ENCODE measurements at regions of chr3 and their contacts with region 1.

Region 1: GRCh38 chr3:52056968-52057805 is 816 bp upstream of the DUSP7 start:
- DNase-seq: peak; percentile 90 to 100 (median 99)
- ATAC-seq: peak; percentile 93
- H3K4me3 ChIP-seq: peak overlapping the region; percentile 92
- H3K4me3 Mint-ChIP-seq: peak overlapping the region; percentile 90 to 97 (median 94)
- H3K27ac ChIP-seq: peak overlapping the region; percentile 79
- H3K27ac Mint-ChIP-seq: peak overlapping the region; percentile 78 to 97 (median 93)
- H3K4me1 ChIP-seq: peaks cover 34 to 35% of the 10 kb centered on the region in 2 donors
- H3K4me1 Mint-ChIP-seq: peaks cover 26 to 39% (median 26%) of the 10 kb centered on the region in 7 donors
- H3K27me3 ChIP-seq: no peaks in the 10 kb centered on the region
- H3K27me3 Mint-ChIP-seq: peaks cover 0 to 4% (median 0%) of the 10 kb centered on the region in 5 donors

Region 2: DNA sequence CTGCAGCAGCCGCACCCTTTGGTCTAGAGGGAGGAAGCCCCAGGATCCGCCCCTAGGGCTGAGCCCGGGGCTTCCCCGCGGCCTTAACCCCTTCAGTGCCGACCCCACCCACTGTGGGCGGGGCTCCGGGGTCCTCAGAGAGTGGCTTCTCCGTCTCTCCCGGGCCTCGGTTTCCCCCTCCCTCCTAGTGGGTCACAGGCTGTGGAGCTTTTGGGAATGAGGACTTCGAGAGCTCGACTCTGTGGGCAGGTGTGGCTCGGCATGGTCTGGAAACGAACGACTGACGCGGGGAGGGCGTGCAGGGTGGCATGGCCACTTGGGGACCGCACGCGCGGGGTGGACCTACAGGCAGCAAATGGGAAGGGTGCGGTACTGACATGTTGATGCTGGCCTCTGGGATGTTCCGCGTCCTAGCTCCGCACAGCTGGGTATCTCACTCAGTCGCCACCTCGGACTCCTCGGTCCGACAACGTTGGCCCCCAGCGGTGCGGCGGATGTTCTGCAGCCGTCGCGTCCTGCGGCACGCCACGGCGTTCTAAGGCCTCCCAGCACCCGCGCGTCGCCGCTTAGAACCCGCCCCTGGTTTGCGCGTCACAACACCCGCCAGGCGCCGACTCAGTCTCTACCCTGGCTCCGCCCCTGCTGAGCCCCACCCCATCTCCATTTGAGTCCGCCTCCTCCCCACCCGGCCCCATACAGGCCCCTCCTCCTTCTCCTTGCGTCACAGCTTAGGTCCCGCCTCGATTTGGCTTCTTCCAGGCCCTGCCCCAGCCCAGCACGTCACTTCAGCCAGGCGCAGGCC is 1758.2 kb before region 1 on chr3 and contains the starts of genes HYAL3 and NAA80:
- CTCF ChIA-PET with region 1: no interaction called
- POLR2A ChIA-PET with region 1: no interaction called
- intact Hi-C with region 1: loop called in 1 of 2 experiments (anchors 10 kb)
- DNase-seq: peak; percentile 94 to 100 (median 99)
- ATAC-seq: peak; percentile 93
- H3K4me3 ChIP-seq: peak within 1 kb of the TSS; percentile 97
- H3K4me3 Mint-ChIP-seq: peak within 1 kb of the TSS; percentile 84 to 99 (median 97)
- H3K27ac ChIP-seq: peak within 1 kb of the TSS; percentile 86
- H3K27ac Mint-ChIP-seq: peak within 1 kb of the TSS; percentile 90 to 100 (median 99)
- H3K4me1 ChIP-seq: peaks cover 19 to 20% of the 10 kb centered on the region in 2 donors
- H3K4me1 Mint-ChIP-seq: peaks cover 12 to 36% (median 22%) of the 10 kb centered on the region in 7 donors
- H3K27me3 ChIP-seq: no peaks in the 10 kb centered on the region
- H3K27me3 Mint-ChIP-seq: no peaks in the 10 kb centered on the region
- total RNA-seq, gene HYAL3: 3.4 to 10.7 (median 4.2) TPM
- total RNA-seq, gene NAA80: 30.2 to 44.9 (median 33.6) TPM

Region 3: GRCh38 chr3:51498876-51499738 is 558.1 kb before region 1 on chr3:
- CTCF ChIA-PET with region 1: no interaction called
- POLR2A ChIA-PET with region 1: interaction called, 5 read pairs
- intact Hi-C with region 1: loop called in 1 of 2 experiments (anchors 2 kb)
- DNase-seq: peak; percentile 52 to 90 (median 73)
- ATAC-seq: peak; percentile 58
- H3K4me3 ChIP-seq: peak overlapping the region; percentile 84
- H3K4me3 Mint-ChIP-seq: peak overlapping the region; percentile 87 to 100 (median 98)
- H3K27ac ChIP-seq: peak overlapping the region; percentile 90
- H3K27ac Mint-ChIP-seq: peak overlapping the region; percentile 90 to 99 (median 94)
- H3K4me1 ChIP-seq: peaks cover 10 to 14% of the 10 kb centered on the region in 2 donors
- H3K4me1 Mint-ChIP-seq: peaks cover 4 to 38% (median 35%) of the 10 kb centered on the region in 7 donors
- H3K27me3 ChIP-seq: no peaks in the 10 kb centered on the region
- H3K27me3 Mint-ChIP-seq: peaks cover 0 to 2% (median 0%) of the 10 kb centered on the region in 5 donors

Region 4: GRCh38 chr3:51995346-51996163 is 61.6 kb before region 1 on chr3 and contains the start of gene RPL29:
- CTCF ChIA-PET with region 1: interaction called, 70 read pairs
- POLR2A ChIA-PET with region 1: interaction called, 33 read pairs
- intact Hi-C with region 1: loop called in 1 of 2 experiments (anchors 1 kb)
- DNase-seq: peak; percentile 80 to 95 (median 92)
- ATAC-seq: peak; percentile 99
- H3K4me3 ChIP-seq: peak within 1 kb of the TSS; percentile 98
- H3K4me3 Mint-ChIP-seq: peak within 1 kb of the TSS; percentile 92 to 100 (median 98)
- H3K27ac ChIP-seq: peak within 1 kb of the TSS; percentile 95
- H3K27ac Mint-ChIP-seq: peak within 1 kb of the TSS; percentile 98 to 100 (median 100)
- H3K4me1 ChIP-seq: peaks cover 13 to 15% of the 10 kb centered on the region in 2 donors
- H3K4me1 Mint-ChIP-seq: peaks cover 19 to 44% (median 31%) of the 10 kb centered on the region in 7 donors
- H3K27me3 ChIP-seq: no peaks in the 10 kb centered on the region
- H3K27me3 Mint-ChIP-seq: peaks cover 0 to 16% (median 0%) of the 10 kb centered on the region in 5 donors
- total RNA-seq, gene RPL29: 1,152 to 1,744 (median 1,537) TPM

Region 5: GRCh38 chr3:52144034-52144795 is 87.0 kb after region 1 on chr3:
- CTCF ChIA-PET with region 1: interaction called, 5 read pairs
- POLR2A ChIA-PET with region 1: interaction called, 3 read pairs
- intact Hi-C with region 1: loop called (anchors 1 to 2 kb)
- DNase-seq: peak; percentile 70 to 88 (median 82)
- ATAC-seq: peak; percentile 98
- H3K4me3 ChIP-seq: no peak overlapping the region
- H3K4me3 Mint-ChIP-seq: peak overlapping the region in 1 of 10 donors; percentile 6
- H3K27ac ChIP-seq: no peak overlapping the region
- H3K27ac Mint-ChIP-seq: peak overlapping the region in 5 of 9 donors; percentile 38 to 80 (median 64)
- H3K4me1 ChIP-seq: peaks cover 5 to 6% of the 10 kb centered on the region in 2 donors
- H3K4me1 Mint-ChIP-seq: peaks cover 5 to 10% (median 7%) of the 10 kb centered on the region in 7 donors
- H3K27me3 ChIP-seq: no peaks in the 10 kb centered on the region
- H3K27me3 Mint-ChIP-seq: no peaks in the 10 kb centered on the region

Region 6: GRCh38 chr3:52238761-52239701 is 181.8 kb after region 1 on chr3 and contains the start of gene TWF2:
- CTCF ChIA-PET with region 1: interaction called, 3 read pairs
- POLR2A ChIA-PET with region 1: interaction called, 4 read pairs
- intact Hi-C with region 1: loop called in 1 of 2 experiments (anchors 1 kb)
- DNase-seq: peak; percentile 87 to 96 (median 91)
- ATAC-seq: peak; percentile 91
- H3K4me3 ChIP-seq: peak within 1 kb of the TSS; percentile 92
- H3K4me3 Mint-ChIP-seq: peak within 1 kb of the TSS; percentile 86 to 100 (median 96)
- H3K27ac ChIP-seq: peak within 1 kb of the TSS; percentile 95
- H3K27ac Mint-ChIP-seq: peak within 1 kb of the TSS; percentile 83 to 99 (median 97)
- H3K4me1 ChIP-seq: peaks cover 59 to 62% of the 10 kb centered on the region in 2 donors
- H3K4me1 Mint-ChIP-seq: peaks cover 59 to 88% (median 76%) of the 10 kb centered on the region in 7 donors
- H3K27me3 ChIP-seq: no peaks in the 10 kb centered on the region
- H3K27me3 Mint-ChIP-seq: no peaks in the 10 kb centered on the region
- total RNA-seq, gene TWF2: 38.7 to 110 (median 63.7) TPM

Region 7: DNA sequence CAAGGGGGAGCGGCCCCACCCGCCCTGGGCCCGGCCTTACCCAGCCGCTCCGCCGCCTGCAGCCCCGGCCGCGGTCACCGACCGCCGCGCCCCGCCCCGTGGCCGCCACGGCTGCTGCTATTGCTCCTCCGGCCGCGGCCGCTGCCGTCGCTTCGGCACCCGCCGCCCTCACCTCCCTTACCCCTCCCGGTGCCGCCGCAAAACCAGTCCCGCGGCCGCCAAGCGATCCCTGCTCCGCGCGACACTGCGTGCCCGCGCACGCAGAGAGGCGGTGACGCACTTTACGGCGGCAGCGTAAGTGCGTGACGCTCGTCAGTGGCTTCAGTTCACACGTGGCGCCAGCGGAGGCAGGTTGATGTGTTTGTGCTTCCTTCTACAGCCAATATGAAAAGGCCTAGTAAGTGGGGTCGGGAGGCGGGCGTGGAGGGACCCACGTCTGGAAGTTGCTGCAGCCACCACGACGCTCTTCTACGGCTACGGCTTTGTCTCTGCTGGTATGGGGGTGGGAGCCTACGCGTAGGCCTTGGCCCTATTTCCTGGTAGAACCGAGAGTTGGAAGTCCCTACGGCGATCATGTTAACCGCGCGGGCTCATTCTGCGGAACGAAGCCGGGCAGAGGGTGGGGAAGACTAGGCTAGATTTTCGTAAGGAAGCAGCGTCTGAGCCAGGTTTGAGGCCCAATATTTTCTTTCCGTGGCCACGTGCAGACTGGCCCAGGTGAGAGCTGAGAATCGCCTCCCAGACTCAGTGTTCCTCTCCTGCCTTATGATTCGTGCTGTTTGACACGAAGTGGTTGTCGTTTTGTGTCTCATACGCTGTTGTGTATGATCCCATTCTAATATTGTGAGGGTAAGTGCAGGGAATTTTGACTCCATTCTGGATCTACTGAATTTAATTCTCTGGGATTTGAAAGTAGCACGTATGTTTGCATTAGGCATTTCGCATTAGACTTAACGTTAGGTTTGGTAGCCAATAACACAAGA is 628.8 kb after region 1 on chr3 and contains the starts of genes GNL3 and PBRM1:
- CTCF ChIA-PET with region 1: no interaction called
- POLR2A ChIA-PET with region 1: no interaction called
- intact Hi-C with region 1: loop called in 1 of 2 experiments (anchors 2 kb)
- DNase-seq: peak; percentile 87 to 94 (median 92)
- ATAC-seq: peak; percentile 96
- H3K4me3 ChIP-seq: peak within 1 kb of the TSS; percentile 80
- H3K4me3 Mint-ChIP-seq: peak within 1 kb of the TSS; percentile 95 to 99 (median 98)
- H3K27ac ChIP-seq: peak within 1 kb of the TSS; percentile 89
- H3K27ac Mint-ChIP-seq: peak within 1 kb of the TSS; percentile 93 to 99 (median 98)
- H3K4me1 ChIP-seq: peaks cover 21 to 25% of the 10 kb centered on the region in 2 donors
- H3K4me1 Mint-ChIP-seq: peaks cover 23 to 72% (median 62%) of the 10 kb centered on the region in 7 donors
- H3K27me3 ChIP-seq: no peaks in the 10 kb centered on the region
- H3K27me3 Mint-ChIP-seq: no peaks in the 10 kb centered on the region
- total RNA-seq, gene GNL3: 87.9 to 116 (median 97.2) TPM
- total RNA-seq, gene PBRM1: 58.4 to 83.8 (median 74.2) TPM